Activated T-helper 2 cell treated with anti-CD3 and anti-CD28 coated beads, Interferon-gamma antibody, Interleukin-2, Interleukin-4, amounts not matched to agents 10 μg/mL and 5 μg/mL and 100 μg/mL, durations not matched to agents 14 hours and 24 hours and 36 hours (primary cell): ENCODE measurements at regions of chr4 and their contacts with region 1.

Region 1: DNA sequence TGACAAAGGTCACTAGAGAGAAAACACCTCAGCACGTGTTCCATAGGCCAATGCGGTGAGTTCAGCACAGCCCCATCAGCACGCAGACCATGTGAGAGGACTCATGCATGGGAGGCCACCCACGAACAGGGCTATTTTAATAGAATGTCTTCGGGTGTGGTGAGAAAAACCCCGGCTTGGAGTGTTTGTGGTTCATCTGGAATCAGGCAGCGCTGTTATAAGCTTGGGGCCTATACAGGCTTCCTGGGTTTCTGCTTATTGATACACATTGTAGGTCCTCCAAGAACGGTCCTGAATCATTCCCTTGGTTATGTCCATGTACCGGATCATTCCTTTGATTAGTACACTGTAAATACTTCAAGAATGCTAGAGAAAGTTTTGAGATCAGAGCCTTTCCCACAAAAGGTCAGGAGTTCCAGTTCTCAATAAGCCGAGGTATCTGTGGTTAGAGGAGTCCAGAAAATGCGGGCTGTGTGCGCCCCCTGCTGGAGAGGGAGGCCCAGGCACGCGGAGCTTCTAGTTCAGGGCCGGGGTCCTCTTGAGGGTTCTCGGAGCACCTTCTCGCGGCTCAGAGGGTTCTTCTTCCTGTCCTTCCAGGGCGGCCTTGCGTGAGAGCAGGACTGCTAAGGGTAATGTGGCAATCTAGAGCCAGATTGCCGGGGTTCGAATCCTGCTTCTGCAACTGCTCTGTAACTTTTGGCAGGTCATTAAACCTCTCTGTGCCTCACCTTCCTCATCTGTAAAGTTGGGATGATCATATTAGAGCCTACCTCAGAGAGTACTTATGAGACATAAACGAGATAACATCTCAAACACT is 51.8 kb downstream of the TLR10 start:
- DNase-seq: peak; percentile 64
- H3K4me3 Mint-ChIP-seq: no peak overlapping the region
- H3K27ac Mint-ChIP-seq: no peak overlapping the region
- H3K4me1 Mint-ChIP-seq: peaks cover 10% of the 10 kb centered on the region
- H3K27me3 Mint-ChIP-seq: peaks cover 21% of the 10 kb centered on the region

Region 2: DNA sequence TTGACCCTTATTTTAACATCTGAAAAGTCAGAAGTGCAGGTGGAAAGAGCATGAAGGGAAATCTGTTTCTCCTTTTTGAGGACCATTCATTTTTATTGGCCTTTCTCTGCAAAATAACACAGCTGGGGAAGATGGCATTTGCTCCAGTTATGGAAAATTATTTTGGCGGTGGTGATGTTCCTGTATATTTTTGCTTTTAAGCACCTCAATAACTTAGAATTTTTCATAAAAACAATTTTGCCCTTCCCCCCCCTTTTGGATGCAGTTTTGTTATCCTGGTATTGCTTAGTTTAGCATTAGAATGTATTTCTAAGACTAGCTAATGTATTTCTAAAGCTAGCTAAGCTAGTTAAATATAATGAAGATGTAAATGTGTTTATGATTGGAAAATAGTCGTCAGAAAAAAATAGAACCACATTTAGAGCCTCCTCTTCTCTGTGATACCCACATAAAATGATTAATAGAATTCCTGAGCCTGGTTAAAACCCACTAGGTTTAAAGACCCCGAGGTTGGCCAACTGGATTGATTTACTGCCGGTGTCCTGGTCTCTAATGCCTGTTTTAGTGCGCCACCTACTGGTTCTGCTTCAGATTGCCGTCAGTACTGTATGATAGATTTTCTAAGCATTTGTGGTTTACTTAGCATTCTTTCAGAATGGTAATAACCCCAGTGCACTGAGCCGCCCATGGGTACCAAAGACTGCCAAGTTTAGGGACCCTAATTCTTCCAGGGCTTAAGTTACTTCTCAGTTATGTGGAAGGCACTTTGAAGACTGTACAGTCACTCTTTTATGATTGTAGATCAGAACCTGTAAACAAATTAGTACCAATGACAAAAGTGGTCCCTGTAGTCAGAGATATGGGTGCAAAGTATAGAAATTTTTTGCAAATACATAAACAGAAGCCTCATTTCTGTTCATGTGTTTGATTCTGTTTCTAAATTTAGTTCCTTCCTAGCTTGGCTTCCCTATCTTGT is 55.6 kb before region 1 on chr4:
- intact Hi-C with region 1: loop called (anchors 5 kb)
- DNase-seq: peak; percentile 68
- H3K4me3 Mint-ChIP-seq: no peak overlapping the region
- H3K27ac Mint-ChIP-seq: no peak overlapping the region
- H3K4me1 Mint-ChIP-seq: peaks cover 18% of the 10 kb centered on the region
- H3K27me3 Mint-ChIP-seq: peaks cover 30% of the 10 kb centered on the region